HCT116 (cell line): ENCODE measurements at regions of chr9 and their contacts with region 1.

Region 1: GRCh38 chr9:36400332-36401163 is 479 bp upstream of the RNF38 start:
- DNase-seq: peak; percentile 57
- ATAC-seq: peak; percentile 85
- H3K4me3 ChIP-seq: peak overlapping the region; percentile 65 to 85
- H3K27ac ChIP-seq: peak overlapping the region; percentile 90
- H3K4me1 ChIP-seq: peaks cover 7 to 23% of the 10 kb centered on the region in 2 experiments; a peak in 3 of 4 replicates
- H3K27me3 ChIP-seq: no peaks in the 10 kb centered on the region
- CTCF ChIP-seq: no peak
- POLR2A ChIP-seq: peak; percentile 29
- RAD21 ChIP-seq: no peak

Region 2: DNA sequence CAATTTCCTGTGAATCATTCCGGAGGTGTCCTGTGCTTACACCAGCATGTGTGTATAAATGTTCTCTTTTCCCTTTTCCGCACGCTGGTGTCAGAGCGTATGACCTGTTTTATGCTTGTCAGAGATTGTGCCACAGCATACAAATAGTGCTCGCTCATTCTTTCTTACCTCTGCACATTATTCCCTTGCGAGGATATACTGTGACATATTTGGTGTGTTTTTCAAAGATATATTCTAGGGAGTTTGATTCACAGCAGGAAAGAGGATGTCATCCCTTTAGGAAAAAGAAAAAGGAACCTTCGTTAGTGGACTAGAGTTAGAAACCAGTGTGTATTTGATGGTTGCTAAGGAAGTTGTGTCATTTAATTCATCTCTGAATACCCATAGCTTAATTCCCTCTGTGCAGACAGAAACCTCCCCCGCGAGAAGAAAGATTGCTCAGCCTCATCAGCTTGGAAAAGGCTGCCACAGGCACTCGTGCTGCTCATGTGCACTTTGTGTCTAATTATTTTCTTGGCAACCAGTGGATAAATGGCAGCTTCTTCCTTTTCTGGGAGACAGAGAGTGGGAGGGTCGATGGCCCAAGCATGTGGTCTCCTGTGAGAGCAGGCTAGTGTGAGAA is 246.1 kb before region 1 on chr9:
- CTCF ChIA-PET with region 1: no interaction called
- POLR2A ChIA-PET with region 1: no interaction called
- RAD21 ChIA-PET with region 1: no interaction called
- intact Hi-C with region 1: no loop called
- DNase-seq: no peak
- ATAC-seq: no peak
- H3K4me3 ChIP-seq: no peak overlapping the region
- H3K27ac ChIP-seq: no peak overlapping the region
- H3K4me1 ChIP-seq: peaks cover 0 to 4% of the 10 kb centered on the region in 2 experiments; a peak in 1 of 4 replicates
- H3K27me3 ChIP-seq: no peaks in the 10 kb centered on the region
- CTCF ChIP-seq: no peak
- POLR2A ChIP-seq: no peak
- RAD21 ChIP-seq: no peak

Region 3: GRCh38 chr9:36306471-36307306 is 93.9 kb before region 1 on chr9:
- CTCF ChIA-PET with region 1: no interaction called
- POLR2A ChIA-PET with region 1: no interaction called
- RAD21 ChIA-PET with region 1: no interaction called
- intact Hi-C with region 1: no loop called
- DNase-seq: no peak
- ATAC-seq: no peak
- H3K4me3 ChIP-seq: no peak overlapping the region
- H3K27ac ChIP-seq: no peak overlapping the region
- H3K4me1 ChIP-seq: peaks cover 4 to 8% of the 10 kb centered on the region in 2 experiments; a peak in 3 of 4 replicates
- H3K27me3 ChIP-seq: no peaks in the 10 kb centered on the region
- CTCF ChIP-seq: no peak
- POLR2A ChIP-seq: no peak
- RAD21 ChIP-seq: no peak

Region 4: GRCh38 chr9:36625006-36625615 is 224.6 kb after region 1 on chr9:
- CTCF ChIA-PET with region 1: no interaction called
- POLR2A ChIA-PET with region 1: no interaction called
- RAD21 ChIA-PET with region 1: no interaction called
- intact Hi-C with region 1: loop called (anchors 10 kb)
- DNase-seq: peak; percentile 7
- ATAC-seq: peak; percentile 80
- H3K4me3 ChIP-seq: no peak overlapping the region
- H3K27ac ChIP-seq: no peak overlapping the region
- H3K4me1 ChIP-seq: peaks cover 3 to 19% of the 10 kb centered on the region in 2 experiments; a peak in 2 of 4 replicates
- H3K27me3 ChIP-seq: no peaks in the 10 kb centered on the region
- CTCF ChIP-seq: no peak
- POLR2A ChIP-seq: no peak
- RAD21 ChIP-seq: no peak